ENCODE measurements at regions of chr9 and their contacts with region 1.

Region 1: GRCh38 chr9:118331622-118332045 is 627.4 kb downstream of the TLR4 start:
- DNase-seq: peak; percentile 76

Region 2: DNA sequence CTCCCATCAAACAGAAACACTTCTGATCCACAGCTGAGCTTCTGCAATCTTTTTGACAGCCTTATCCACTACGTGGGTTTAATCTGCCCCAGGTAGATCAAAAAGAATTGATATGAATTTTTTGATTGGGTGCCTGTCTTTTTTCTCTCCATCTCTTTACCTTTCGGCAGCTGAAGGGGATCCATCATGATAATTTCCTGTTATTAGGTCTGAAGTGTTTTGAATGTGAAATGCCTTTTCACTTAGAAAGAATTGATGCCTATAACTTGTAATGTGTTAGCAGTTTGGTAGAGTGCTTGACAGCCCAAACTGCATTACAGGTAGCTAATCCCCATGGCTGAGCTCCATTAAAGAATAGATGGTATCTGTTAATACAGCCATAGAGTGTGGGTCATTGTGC is 117.9 kb after region 1 on chr9:
- intact Hi-C with region 1: no loop called
- DNase-seq: no peak

Region 3: DNA sequence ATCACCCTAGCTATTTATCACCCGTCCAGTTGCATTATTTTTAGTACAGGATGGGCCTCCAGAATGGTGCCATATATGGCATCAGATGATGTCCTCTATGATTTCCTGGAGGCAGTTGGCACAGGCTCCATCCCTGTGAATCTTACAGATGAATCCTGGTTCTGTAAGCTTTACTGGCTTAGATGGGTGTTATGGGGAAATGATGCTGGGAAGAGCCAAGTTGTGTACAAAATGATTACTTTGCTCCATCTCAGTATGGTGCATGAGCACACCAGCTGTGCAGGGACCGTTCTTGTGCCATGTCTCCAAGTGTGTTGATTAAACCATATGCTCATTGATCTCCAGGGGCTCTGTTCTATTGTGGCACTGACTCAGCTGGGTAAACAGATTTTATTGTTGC is 128.3 kb after region 1 on chr9:
- intact Hi-C with region 1: loop called (anchors 5 kb)
- DNase-seq: no peak

Region 4: DNA sequence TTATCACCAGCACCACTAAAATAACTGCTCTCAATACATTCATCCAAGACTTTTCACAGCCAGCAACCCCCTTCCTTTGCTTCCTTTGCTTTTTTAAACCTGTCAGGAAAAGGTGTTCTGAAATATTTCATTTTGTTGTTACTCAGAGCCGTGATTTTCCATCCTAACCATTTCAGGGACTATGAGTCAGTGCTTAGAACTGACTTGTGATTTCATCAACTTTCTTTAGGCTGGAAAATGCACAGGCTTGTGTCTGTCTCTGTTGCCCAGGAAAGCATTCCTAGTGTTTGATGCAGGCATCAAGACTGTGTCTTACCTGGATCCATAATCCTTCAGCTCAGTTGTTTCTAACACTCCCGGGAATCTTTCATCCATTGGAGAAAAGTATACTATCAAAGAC is 232.0 kb after region 1 on chr9:
- intact Hi-C with region 1: no loop called
- DNase-seq: no peak

Measured in cardiac septum (tissue), 1 donor.